ENCODE measurements at regions of chr5 and their contacts with region 1.

Region 1: DNA sequence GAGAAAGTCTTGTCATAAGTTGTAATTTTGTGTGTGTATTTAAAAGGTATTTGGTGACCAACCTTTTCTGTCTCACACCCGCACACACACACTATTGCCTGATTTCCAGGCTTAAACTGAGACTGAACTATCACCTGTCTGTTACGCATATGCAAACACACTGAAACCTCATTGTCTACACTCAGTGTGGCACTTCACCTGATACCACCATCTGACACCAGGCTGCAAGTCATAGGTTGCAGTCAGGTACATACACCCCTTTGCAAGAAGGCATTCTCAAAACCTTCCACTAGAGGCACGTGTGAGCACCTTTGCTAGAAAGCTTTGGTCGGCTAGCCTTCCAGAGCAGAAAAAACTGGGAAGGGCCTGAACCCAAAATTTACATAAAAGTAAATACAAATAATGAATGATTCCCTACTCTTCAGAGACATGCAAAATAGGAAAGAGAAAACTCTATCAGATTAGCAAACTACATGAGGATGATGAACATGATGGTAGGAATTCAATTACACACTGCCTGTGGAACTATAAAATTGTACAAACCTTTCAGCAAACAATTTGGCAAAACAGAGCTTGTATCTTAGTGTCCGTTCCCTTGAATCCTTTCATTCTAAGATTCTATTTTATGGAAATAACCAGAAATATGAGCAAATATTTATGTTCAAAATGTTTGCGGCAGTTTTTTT is 5.9 kb upstream of the FOXD1 start:
- DNase-seq: peak; percentile 41
- H3K4me3 Mint-ChIP-seq: no peak overlapping the region
- H3K27ac Mint-ChIP-seq: no peak overlapping the region
- H3K4me1 Mint-ChIP-seq: peaks cover 8% of the 10 kb centered on the region
- H3K27me3 Mint-ChIP-seq: peaks cover 74% of the 10 kb centered on the region

Region 2: DNA sequence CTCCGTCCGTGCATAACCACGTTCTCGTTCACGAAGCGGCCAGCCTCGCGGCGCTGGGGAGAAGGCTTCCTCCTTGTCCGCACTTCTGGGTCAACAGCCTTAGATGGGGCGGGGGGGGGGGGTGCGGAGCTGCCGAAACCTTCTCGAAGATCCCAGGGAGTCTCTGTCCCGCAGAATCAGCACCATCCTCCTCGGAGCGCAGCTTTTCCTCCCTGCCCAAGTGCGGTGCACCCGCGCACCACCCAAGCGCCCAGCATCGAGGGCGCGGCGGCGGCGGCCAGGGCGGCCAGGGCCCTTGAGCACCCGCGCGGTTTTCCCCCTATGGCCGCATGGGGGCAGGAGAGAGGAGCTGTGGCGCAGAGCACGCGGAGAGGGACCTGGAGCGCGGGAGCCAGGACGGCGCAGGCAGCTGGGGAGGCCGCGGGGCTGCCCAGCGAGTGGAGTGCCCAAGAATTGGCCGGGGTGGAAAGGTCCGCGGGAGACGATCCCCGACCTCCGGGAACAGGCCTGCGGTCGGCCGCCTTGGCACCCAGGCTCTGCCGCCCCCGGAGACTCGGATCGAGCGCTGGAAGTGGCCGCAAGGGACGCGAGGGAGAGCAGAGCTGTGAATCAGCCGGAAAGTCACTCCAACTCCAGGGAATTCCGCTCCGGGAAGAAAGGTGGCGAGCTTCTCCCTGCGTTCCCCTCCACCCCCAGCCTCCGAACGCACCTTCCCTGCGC is 238.4 kb before region 1 on chr5:
- CTCF ChIA-PET with region 1: interaction called, 11 read pairs
- POLR2A ChIA-PET with region 1: no interaction called
- DNase-seq: peak; percentile 59
- H3K4me3 Mint-ChIP-seq: no peak overlapping the region
- H3K27ac Mint-ChIP-seq: no peak overlapping the region
- H3K4me1 Mint-ChIP-seq: peaks cover 10% of the 10 kb centered on the region
- H3K27me3 Mint-ChIP-seq: peaks cover 89% of the 10 kb centered on the region

Region 3: GRCh38 chr5:73233347-73234200 is 220.9 kb before region 1 on chr5:
- CTCF ChIA-PET with region 1: interaction called, 3 read pairs
- POLR2A ChIA-PET with region 1: interaction called, 13 read pairs
- DNase-seq: no peak
- H3K4me3 Mint-ChIP-seq: no peak overlapping the region
- H3K27ac Mint-ChIP-seq: no peak overlapping the region
- H3K4me1 Mint-ChIP-seq: peaks cover 15% of the 10 kb centered on the region
- H3K27me3 Mint-ChIP-seq: peaks cover 75% of the 10 kb centered on the region